ENCODE measurements at regions of chr2 and their contacts with region 1.

Region 1: DNA sequence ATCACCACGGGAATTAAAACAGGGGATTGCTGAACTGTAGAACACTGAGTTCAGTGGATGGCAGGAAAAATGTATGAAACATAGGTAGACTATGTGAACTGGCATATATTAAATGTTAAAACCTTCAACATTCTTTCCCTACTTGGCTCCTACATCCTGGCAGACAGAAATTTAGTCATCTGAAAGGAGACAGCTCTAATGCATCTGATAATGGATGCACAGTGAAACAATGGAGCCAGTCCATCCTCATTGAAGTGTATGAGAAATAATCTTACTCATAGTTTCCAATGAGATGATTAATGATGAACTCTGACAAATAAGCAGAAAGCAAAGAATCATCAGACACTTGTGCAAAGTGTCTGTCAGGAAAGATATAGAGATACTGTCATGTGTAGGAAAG is 1629.7 kb upstream of the TMEFF2 start:
- DNase-seq: no peak
- ATAC-seq: no peak
- H3K4me3 ChIP-seq: no peak overlapping the region
- H3K4me3 Mint-ChIP-seq: no peak overlapping the region
- H3K27ac ChIP-seq: no peak overlapping the region
- H3K27ac Mint-ChIP-seq: no peak overlapping the region
- H3K4me1 ChIP-seq: no peaks in the 10 kb centered on the region
- H3K4me1 Mint-ChIP-seq: no peaks in the 10 kb centered on the region
- H3K27me3 ChIP-seq: no peaks in the 10 kb centered on the region
- H3K27me3 Mint-ChIP-seq: no peaks in the 10 kb centered on the region

Region 2: DNA sequence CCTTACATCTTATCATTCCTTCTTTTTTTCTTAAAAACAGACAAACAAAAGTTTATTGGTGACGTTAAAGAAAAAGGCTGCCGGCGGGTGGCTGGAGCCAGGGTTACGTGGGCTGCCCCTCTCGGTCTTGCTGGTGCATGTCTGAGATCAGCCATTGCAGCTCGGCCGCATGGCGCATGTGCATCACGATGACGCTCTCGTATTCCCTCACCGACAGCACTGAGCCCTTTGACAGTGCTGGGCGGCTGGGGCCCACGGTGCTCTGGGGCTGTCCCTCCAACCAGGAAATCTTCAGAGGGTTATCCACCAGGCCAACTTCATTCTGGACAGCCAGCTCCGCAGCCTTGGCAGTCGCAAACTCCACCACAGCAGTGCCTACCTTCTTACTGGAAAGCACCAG is 547.9 kb before region 1 on chr2:
- CTCF ChIA-PET with region 1: no interaction called
- POLR2A ChIA-PET with region 1: no interaction called
- intact Hi-C with region 1: no loop called
- DNase-seq: no peak
- ATAC-seq: no peak
- H3K4me3 ChIP-seq: no peak overlapping the region
- H3K4me3 Mint-ChIP-seq: no peak overlapping the region
- H3K27ac ChIP-seq: no peak overlapping the region
- H3K27ac Mint-ChIP-seq: no peak overlapping the region
- H3K4me1 ChIP-seq: no peaks in the 10 kb centered on the region
- H3K4me1 Mint-ChIP-seq: no peaks in the 10 kb centered on the region
- H3K27me3 ChIP-seq: no peaks in the 10 kb centered on the region
- H3K27me3 Mint-ChIP-seq: no peaks in the 10 kb centered on the region

Region 3: GRCh38 chr2:193837111-193837737 is 12.8 kb after region 1 on chr2:
- CTCF ChIA-PET with region 1: no interaction called
- POLR2A ChIA-PET with region 1: no interaction called
- intact Hi-C with region 1: loop called in 1 of 2 experiments (anchors 1 kb)
- DNase-seq: no peak
- ATAC-seq: no peak
- H3K4me3 ChIP-seq: no peak overlapping the region
- H3K4me3 Mint-ChIP-seq: no peak overlapping the region
- H3K27ac ChIP-seq: no peak overlapping the region
- H3K27ac Mint-ChIP-seq: no peak overlapping the region
- H3K4me1 ChIP-seq: no peaks in the 10 kb centered on the region
- H3K4me1 Mint-ChIP-seq: no peaks in the 10 kb centered on the region
- H3K27me3 ChIP-seq: no peaks in the 10 kb centered on the region
- H3K27me3 Mint-ChIP-seq: no peaks in the 10 kb centered on the region

Measured in naive thymus-derived CD4-positive, alpha-beta T cell (primary cell).